Sigmoid colon (tissue), 7 donors: ENCODE measurements at regions of chr18 and their contacts with region 1.

Region 1: DNA sequence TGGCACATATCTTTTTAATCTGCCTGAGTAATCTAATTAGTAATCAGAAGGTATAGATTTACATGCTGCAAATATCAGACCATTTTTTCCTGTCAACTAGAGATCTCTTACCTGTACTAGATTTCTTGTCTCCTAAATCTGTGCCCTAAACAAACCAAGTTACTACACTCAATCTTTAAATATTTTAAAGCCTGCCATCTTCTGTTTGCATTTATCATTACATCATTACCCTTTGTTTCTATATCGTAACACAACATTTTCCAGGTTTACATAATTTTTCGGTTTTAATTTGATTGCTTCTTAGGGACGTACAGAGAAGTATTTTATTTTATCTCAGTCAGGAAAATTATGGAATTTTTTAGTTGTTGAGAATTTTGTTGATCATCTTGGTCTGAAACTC is 25.7 kb downstream of the PSMA8 start:
- DNase-seq: no peak
- H3K4me3 ChIP-seq: no peak overlapping the region
- H3K27ac ChIP-seq: no peak overlapping the region
- H3K4me1 ChIP-seq: no peaks in the 10 kb centered on the region
- H3K27me3 ChIP-seq: no peaks in the 10 kb centered on the region
- CTCF ChIP-seq: no peak
- EP300 ChIP-seq: no peak
- POLR2A ChIP-seq: no peak

Region 2: DNA sequence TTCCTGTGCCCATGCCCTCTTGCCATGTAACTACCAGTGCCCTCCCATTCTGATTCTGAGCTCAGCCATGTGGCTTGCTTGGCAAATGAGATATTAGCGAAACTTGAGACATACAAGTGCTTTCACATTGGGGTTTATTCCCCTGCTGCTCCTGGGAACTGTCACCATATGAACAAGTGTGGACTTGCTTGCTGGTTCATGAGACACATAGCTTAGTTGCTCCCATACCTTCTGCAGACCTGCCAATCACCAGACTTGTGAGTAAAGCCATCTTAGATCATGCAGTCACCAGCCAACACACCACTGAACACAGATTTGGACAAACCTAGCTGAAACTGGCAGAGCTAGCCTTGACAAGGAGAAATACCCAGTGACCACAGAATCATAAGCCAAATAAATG is 224.0 kb before region 1 on chr18:
- intact Hi-C with region 1: loop called (anchors 10 kb)
- DNase-seq: no peak
- H3K4me3 ChIP-seq: no peak overlapping the region
- H3K27ac ChIP-seq: no peak overlapping the region
- H3K4me1 ChIP-seq: no peaks in the 10 kb centered on the region
- H3K27me3 ChIP-seq: no peaks in the 10 kb centered on the region
- CTCF ChIP-seq: no peak
- EP300 ChIP-seq: no peak
- POLR2A ChIP-seq: no peak

Region 3: GRCh38 chr18:26057344-26057773 is 102.0 kb before region 1 on chr18:
- intact Hi-C with region 1: no loop called
- DNase-seq: no peak
- H3K4me3 ChIP-seq: no peak overlapping the region
- H3K27ac ChIP-seq: no peak overlapping the region
- H3K4me1 ChIP-seq: no peaks in the 10 kb centered on the region
- H3K27me3 ChIP-seq: no peaks in the 10 kb centered on the region
- CTCF ChIP-seq: no peak
- EP300 ChIP-seq: no peak
- POLR2A ChIP-seq: no peak

Region 4: DNA sequence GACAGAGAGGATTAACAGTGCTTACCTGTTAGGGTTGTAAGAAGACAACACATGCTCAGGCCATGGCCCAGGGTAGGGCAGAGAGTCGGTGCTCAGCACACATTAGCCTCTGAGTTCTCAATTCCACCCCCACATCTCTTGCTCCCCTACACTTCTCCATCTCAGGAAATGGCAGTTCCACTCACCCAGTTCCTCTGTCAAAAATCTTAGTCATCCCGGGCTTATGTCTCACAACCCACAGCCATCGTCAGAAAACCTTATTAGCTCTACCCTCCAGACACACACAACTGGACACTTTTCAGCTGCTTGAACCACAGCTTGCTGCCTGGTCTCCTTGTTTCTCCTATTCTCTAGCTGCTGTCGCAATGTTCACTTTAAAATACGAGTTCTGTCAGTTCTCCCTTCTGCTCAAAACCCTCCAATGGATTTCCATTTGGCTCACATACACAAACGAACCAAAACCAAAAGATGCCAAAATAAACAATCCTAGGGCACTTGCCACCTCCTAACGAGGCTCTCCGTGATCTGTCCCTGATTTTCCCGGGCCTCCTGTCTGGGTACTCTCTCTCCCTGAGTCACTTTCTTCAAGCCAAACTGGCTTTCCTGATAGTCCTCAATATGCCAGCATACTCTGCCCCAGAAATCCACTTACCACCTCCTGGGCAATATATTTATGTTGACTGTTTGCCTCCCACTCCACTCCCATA is 299.3 kb after region 1 on chr18:
- intact Hi-C with region 1: no loop called
- DNase-seq: no peak
- H3K4me3 ChIP-seq: no peak overlapping the region
- H3K27ac ChIP-seq: no peak overlapping the region
- H3K4me1 ChIP-seq: no peaks in the 10 kb centered on the region
- H3K27me3 ChIP-seq: no peaks in the 10 kb centered on the region
- CTCF ChIP-seq: no peak
- EP300 ChIP-seq: no peak
- POLR2A ChIP-seq: no peak

Region 5: DNA sequence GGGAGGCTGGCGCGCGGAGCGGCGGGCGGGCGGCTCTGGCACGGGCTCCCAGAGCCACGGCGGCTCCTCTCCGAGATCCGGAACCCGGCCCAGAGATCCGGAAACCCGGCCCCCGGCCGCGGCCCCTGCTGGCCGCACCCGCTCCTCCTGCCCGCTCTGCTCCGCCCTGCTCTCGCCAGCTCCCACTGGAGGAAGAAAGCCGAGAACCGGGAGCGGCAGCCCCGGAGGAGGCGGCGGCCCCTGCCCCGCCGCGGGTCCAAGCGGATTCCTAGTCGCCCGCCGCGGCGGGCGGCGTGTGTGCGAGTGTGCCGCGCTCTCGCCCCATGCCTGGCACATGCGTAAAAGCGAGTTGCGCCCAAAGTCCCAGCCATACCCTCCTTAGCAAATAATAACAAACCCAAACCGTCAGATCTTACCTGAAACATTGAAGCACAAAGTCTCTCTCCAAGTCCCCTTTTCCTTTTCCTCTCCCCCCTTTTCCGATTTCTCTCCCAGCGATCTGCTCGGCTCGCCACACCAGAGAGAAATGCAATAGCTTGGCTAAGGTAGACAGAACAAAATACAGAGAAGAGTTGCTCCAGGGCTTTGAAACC is 497.7 kb after region 1 on chr18:
- intact Hi-C with region 1: no loop called
- DNase-seq: peak; percentile 84
- H3K4me3 ChIP-seq: peak overlapping the region; percentile 67 to 92 (median 76)
- H3K27ac ChIP-seq: peak overlapping the region; percentile 83 to 91 (median 86)
- H3K4me1 ChIP-seq: peaks cover 0 to 27% (median 23%) of the 10 kb centered on the region in 4 donors
- H3K27me3 ChIP-seq: no peaks in the 10 kb centered on the region
- CTCF ChIP-seq: no peak
- EP300 ChIP-seq: no peak
- POLR2A ChIP-seq: no peak